PC-9 (cell line): ENCODE measurements at regions of chr12 and their contacts with region 1.

Region 1: DNA sequence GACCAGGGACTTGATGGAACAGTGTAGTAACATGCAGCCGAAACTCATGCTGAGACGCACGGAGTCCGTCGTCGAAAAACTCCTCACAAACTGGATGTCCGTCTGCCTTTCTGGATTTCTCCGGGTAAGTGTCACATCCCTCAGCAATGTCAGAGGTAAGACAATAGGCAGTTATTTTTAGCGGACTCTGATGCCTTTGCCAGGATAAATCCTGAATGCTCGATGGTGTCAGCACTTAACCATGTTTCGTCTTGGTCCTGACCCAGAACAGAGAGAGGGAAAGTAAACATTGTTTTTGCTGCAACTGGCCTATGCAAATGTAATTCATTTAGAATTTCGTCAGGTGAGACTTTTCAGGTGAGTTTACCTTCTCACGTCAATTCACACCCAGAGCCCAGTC is 112.3 kb downstream of the PLXNC1 start:
- DNase-seq: no peak
- H3K4me3 ChIP-seq: no peak overlapping the region
- H3K27ac ChIP-seq: no peak overlapping the region
- H3K4me1 ChIP-seq: no peaks in the 10 kb centered on the region
- H3K27me3 ChIP-seq: no peaks in the 10 kb centered on the region
- CTCF ChIP-seq: no peak

Region 2: DNA sequence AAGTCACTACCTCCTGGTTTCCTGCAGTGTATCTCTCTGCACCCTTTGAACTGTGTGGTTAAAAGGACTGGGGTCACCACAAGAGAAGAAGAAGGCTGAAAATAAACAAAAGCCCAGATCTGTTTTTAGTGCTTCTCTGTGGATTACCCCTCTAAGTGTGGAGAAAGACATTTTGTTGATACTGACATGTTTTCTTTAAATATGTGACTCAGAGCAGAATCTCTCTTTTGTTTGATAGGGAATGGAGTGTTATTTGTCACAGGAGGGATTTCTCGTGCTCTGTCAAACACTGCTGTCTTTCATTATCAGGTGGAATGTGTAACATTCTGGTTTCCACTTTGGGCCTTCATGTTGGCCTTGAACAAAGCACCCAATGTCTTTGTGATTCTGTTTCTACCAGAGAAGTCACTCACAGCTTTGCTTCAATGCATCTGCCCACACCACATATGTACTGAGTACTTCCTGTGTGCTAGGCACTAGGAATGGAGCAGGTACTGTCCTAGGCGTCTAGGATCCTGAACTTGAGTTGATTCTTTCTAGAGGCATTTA is 30.3 kb before region 1 on chr12:
- CTCF ChIA-PET with region 1: no interaction called
- POLR2A ChIA-PET with region 1: interaction called, 25 read pairs
- intact Hi-C with region 1: no loop called
- DNase-seq: no peak
- H3K4me3 ChIP-seq: no peak overlapping the region
- H3K27ac ChIP-seq: no peak overlapping the region
- H3K4me1 ChIP-seq: no peaks in the 10 kb centered on the region
- H3K27me3 ChIP-seq: peaks cover 96% of the 10 kb centered on the region
- CTCF ChIP-seq: no peak